Mammary epithelial cell (primary cell): ENCODE measurements at regions of chr17 and their contacts with region 1.

Region 1: GRCh38 chr17:4492721-4493561 is 5.7 kb upstream of the SPNS2 start:
- DNase-seq: peak; percentile 32
- H3K4me3 ChIP-seq: no peak overlapping the region
- H3K27ac ChIP-seq: no peak overlapping the region
- H3K4me1 ChIP-seq: peaks cover 6% of the 10 kb centered on the region
- H3K27me3 ChIP-seq: peaks cover 3% of the 10 kb centered on the region
- CTCF ChIP-seq: no peak

Region 2: DNA sequence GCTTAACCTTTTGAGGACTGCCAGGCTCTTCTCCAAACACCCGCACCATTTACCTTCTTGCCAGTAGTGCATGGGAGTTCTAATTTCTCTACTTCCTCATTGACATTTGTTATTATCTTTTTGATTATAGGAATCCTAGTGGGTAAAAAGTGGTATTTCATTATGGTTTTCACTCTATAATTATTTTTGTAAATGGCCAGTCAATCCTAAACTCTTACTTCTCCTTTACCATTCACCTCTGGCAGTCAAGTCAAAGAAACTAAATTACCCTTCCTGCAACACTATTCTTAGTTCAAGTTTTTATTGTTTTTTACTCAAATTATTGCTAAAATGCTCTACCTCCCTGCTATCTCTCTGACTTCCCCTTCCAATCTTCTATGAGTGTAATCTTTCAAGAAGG is 199.4 kb before region 1 on chr17:
- CTCF ChIA-PET with region 1: no interaction called
- dilution Hi-C with region 1: no loop called
- in situ Hi-C with region 1: no loop called
- intact Hi-C with region 1: no loop called
- DNase-seq: no peak
- H3K4me3 ChIP-seq: no peak overlapping the region
- H3K27ac ChIP-seq: no peak overlapping the region
- H3K4me1 ChIP-seq: peaks cover 6% of the 10 kb centered on the region
- H3K27me3 ChIP-seq: no peaks in the 10 kb centered on the region
- CTCF ChIP-seq: no peak

Region 3: GRCh38 chr17:4721203-4722135 is 228.5 kb after region 1 on chr17:
- CTCF ChIA-PET with region 1: no interaction called
- dilution Hi-C with region 1: loop called (anchors 5 kb)
- in situ Hi-C with region 1: no loop called
- intact Hi-C with region 1: no loop called
- DNase-seq: no peak
- H3K4me3 ChIP-seq: no peak overlapping the region
- H3K27ac ChIP-seq: no peak overlapping the region
- H3K4me1 ChIP-seq: peaks cover 4% of the 10 kb centered on the region
- H3K27me3 ChIP-seq: no peaks in the 10 kb centered on the region
- CTCF ChIP-seq: no peak